WTC11 (cell line): ENCODE measurements at regions of chr3 and their contacts with region 1.

Region 1: DNA sequence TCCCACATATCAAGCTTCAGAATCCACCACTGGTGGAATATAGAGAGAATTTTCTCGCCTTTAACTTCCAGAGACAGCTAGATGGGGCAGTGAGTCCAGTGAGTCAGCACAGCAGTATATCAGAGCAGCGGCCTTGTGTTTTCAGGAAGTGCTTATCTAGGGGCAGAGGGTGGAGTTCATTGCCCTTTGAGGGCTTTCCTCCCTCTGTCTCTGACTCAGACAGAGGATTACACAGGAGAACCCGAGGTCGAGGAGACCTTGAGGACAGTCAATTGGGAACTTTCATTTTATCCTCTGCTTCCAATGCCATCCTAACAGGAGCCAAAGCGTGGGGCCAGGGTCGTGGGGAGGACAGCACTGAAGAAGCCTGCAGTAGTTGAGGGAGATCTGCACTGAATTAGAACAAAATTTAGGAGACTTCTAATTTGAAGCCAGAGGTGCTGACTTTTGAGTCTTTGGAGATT is 109.6 kb upstream of the UMPS start:
- DNase-seq: no peak
- ATAC-seq: peak; percentile 95
- H3K4me3 Mint-ChIP-seq: no peak overlapping the region
- H3K27ac Mint-ChIP-seq: no peak overlapping the region
- H3K4me1 Mint-ChIP-seq: peaks cover 14% of the 10 kb centered on the region
- H3K27me3 Mint-ChIP-seq: no peaks in the 10 kb centered on the region
- CTCF ChIP-seq: no peak

Region 2: DNA sequence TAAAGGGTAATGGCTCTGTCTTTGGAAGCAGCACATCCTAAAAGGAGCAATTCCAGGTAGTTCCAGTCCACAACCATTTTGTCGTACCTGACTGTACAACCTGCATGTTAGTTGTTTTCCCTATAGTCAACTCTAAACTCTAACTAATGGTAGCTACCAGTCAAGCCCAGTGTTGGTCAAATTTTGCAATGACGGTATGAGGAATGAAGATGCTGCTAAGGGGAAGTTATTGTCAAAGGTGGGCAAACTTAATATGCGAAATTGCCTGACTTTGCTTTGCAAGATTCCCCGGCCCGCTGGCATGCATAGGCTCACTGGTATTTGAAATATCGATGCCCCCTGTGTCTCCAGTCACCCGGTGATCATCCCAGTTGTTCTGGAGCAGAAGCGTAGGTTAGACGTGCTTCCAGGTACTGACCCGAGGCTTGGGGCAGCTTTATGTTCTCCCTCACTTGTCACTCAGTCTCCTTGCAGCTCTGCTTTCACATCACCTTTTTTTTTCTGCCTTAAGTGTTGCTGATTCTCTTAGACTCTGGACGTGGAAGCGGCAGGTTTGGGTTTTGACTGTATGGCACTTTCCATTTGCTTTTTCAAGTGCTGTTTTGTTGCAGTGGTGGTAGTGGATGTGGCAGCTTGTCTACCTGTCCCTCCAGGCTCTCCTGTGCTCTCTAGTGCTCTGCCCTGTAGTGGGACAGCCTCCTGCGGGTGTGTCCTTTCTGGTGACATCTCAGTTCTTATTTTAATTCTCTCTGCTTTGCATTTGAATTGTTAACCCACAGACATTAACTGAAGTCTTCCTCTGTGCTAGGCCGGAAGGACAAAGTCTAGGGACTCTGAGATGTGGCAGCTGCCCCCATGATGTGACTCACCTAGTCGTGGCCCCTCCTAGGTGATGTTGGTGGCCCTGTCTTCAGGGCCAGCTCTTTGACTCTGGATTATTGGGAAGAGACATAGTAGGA is 13.9 kb after region 1 on chr3:
- CTCF ChIA-PET with region 1: interaction called, 12 read pairs
- POLR2A ChIA-PET with region 1: no interaction called
- DNase-seq: peak; percentile 17
- ATAC-seq: peak; percentile 84
- H3K4me3 Mint-ChIP-seq: peak overlapping the region; percentile 21; the same call in 1 of the 2 replicates
- H3K27ac Mint-ChIP-seq: peak overlapping the region; percentile 80
- H3K4me1 Mint-ChIP-seq: peaks cover 67% of the 10 kb centered on the region
- H3K27me3 Mint-ChIP-seq: no peaks in the 10 kb centered on the region; the same call in 1 of the 2 replicates
- CTCF ChIP-seq: no peak